WTC11 (cell line): ENCODE measurements at regions of chr2 and their contacts with region 1.

Region 1: DNA sequence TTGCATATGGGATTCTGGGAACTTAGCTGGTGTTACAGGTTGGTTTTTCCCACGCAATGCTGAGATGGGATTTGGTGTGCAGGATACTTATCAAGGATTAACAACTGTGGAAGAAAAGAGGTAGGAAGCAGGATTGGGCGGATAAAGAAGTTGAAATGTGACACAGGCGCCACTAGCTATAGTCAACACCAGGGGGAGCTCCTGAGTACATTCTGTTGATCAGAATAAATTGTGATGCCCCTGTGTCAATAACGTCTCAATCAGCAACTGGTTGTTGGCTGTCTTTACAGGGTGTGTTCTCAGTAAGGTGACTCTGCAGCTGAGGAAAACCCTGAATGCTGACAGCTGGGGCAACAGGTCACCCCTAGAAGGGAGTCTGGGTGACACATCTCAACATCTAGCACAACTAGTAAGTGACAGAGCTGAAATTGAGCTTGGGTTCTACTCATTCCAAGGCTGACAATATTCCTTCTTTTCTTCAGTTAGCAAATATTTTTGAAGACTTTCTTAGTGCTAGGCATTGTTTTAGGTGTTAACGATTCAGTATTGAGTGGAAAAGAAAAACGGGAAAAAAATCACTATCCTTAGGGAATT is 143.0 kb downstream of the ARL6IP6 start:
- DNase-seq: peak; percentile 60
- ATAC-seq: peak; percentile 92
- H3K4me3 Mint-ChIP-seq: no peak overlapping the region
- H3K27ac Mint-ChIP-seq: no peak overlapping the region
- H3K4me1 Mint-ChIP-seq: peaks cover 5% of the 10 kb centered on the region; the same call in 1 of the 2 replicates
- H3K27me3 Mint-ChIP-seq: no peaks in the 10 kb centered on the region; the same call in 1 of the 2 replicates
- CTCF ChIP-seq: peak; percentile 71

Region 2: DNA sequence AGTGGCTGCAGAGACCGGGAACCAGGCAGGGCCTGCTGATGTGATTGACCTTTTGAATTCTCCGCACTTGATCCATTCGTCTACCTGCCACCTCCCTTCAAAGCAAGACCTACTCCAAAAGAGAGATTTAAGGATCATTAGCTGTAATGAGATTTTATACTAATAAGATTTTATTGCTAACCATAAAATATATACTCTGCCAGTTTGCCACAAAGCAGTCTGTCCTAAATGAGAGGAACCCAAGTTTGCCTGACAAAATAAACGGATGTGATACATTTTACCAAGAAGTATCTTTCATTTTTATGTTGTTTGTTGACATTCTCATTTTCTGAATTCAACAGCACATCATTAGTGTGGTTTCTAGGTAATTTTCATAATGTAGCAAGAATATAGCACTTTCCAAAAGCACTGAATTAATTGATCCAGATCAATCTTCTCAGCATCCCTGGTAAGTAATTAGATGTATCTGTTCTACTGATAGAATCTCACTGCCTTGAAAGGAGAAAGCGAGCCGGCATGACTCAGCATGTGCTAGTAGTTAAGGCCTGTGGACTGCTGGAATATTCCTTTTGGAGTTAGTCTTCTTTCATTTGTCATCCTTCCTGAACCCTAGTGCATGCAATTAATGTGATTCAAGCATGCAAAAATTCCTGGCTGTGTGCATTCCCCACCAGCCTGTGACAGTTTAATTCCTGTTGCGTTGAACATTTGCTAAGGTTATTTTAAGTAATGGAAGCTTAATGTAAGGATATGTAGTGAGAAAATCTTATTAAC is 14.6 kb before region 1 on chr2:
- CTCF ChIA-PET with region 1: interaction called, 13 read pairs
- POLR2A ChIA-PET with region 1: no interaction called
- DNase-seq: no peak
- ATAC-seq: no peak
- H3K4me3 Mint-ChIP-seq: no peak overlapping the region
- H3K27ac Mint-ChIP-seq: no peak overlapping the region
- H3K4me1 Mint-ChIP-seq: 0 out of 2 replicates have a peak, but pooled peaks cover 6% of the 10 kb centered on the region
- H3K27me3 Mint-ChIP-seq: no peaks in the 10 kb centered on the region; the same call in 1 of the 2 replicates
- CTCF ChIP-seq: no peak

Region 3: DNA sequence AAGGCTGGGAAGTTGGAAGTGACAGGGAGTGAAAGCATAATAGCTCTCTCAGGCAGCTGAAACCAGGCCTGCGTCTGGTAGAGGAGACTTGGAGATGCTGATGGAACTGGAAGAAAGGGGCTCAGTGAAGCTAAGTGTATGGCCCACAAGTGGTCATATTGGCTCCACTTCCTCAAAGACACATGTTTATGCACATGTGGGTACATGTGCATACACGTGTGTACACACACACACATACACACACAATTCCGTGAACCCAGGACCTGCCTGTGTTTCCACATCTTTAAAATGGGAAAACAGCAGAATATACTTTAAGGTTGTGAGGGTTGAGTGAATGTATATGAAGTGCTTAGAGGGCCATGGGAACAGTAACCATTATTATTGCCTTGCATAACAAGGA is 17.8 kb after region 1 on chr2:
- CTCF ChIA-PET with region 1: interaction called, 10 read pairs
- POLR2A ChIA-PET with region 1: no interaction called
- DNase-seq: no peak
- ATAC-seq: no peak
- H3K4me3 Mint-ChIP-seq: no peak overlapping the region
- H3K27ac Mint-ChIP-seq: no peak overlapping the region
- H3K4me1 Mint-ChIP-seq: peaks cover 16% of the 10 kb centered on the region
- H3K27me3 Mint-ChIP-seq: no peaks in the 10 kb centered on the region; the same call in 1 of the 2 replicates
- CTCF ChIP-seq: no peak

Region 4: GRCh38 chr2:152925547-152926327 is 64.3 kb after region 1 on chr2:
- CTCF ChIA-PET with region 1: interaction called, 14 read pairs
- POLR2A ChIA-PET with region 1: no interaction called
- DNase-seq: peak; percentile 90
- ATAC-seq: peak; percentile 99
- H3K4me3 Mint-ChIP-seq: no peak overlapping the region
- H3K27ac Mint-ChIP-seq: no peak overlapping the region; the same call in 1 of the 2 replicates
- H3K4me1 Mint-ChIP-seq: peaks cover 3% of the 10 kb centered on the region; the same call in 1 of the 2 replicates
- H3K27me3 Mint-ChIP-seq: no peaks in the 10 kb centered on the region; the same call in 1 of the 2 replicates
- CTCF ChIP-seq: peak; percentile 90

Region 5: DNA sequence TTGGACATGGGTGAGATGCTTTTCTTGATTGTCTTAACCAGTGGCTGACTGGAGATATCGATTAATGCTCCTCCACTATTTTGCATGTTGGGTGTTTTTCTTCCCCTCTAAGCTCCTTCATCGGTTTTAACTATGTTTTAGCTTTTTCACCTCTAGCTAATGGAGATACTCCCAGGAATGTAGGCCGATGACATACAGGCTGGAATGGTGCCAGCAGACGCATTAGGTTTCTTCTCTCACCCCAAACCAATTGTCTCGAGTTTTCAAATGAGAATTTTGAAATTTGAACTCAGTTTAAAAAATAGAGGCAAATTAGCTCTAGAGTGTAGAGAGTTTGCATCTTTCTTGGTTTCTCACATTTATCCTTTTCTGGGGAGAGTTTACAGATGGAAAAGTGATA is 369.5 kb after region 1 on chr2:
- CTCF ChIA-PET with region 1: no interaction called
- POLR2A ChIA-PET with region 1: no interaction called
- DNase-seq: no peak
- ATAC-seq: no peak
- H3K4me3 Mint-ChIP-seq: no peak overlapping the region
- H3K27ac Mint-ChIP-seq: no peak overlapping the region
- H3K4me1 Mint-ChIP-seq: no peaks in the 10 kb centered on the region
- H3K27me3 Mint-ChIP-seq: no peaks in the 10 kb centered on the region
- CTCF ChIP-seq: no peak